ENCODE measurements at regions of chr14 and their contacts with region 1.

Region 1: DNA sequence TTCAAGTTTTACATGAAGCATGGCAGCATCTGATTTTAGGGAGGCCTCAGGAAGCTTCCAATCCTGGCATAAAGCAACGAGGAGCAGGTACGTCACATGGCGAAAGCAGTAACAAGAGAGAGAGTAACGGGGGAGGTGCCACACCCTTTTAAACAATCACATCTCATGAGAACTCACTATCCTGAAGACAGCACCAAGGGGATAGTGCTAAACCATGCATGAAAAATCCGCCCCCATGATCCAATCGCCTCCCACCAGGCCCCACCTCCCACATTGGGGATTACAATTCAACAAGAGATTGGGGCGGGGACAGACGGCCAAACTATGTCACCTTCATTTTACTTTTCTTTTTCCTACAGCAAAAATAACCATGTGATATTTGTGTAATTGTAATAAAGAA is 7.2 kb upstream of the MAP3K9 start:
- DNase-seq: peak in 1 of 2 experiments; percentile 16
- ATAC-seq: no peak
- H3K4me3 ChIP-seq: no peak overlapping the region
- H3K27ac ChIP-seq: no peak overlapping the region
- H3K4me1 ChIP-seq: peaks cover 24% of the 10 kb centered on the region
- CTCF ChIP-seq: no peak
- EP300 ChIP-seq: no peak
- POLR2A ChIP-seq: no peak
- RAD21 ChIP-seq: no peak

Region 2: DNA sequence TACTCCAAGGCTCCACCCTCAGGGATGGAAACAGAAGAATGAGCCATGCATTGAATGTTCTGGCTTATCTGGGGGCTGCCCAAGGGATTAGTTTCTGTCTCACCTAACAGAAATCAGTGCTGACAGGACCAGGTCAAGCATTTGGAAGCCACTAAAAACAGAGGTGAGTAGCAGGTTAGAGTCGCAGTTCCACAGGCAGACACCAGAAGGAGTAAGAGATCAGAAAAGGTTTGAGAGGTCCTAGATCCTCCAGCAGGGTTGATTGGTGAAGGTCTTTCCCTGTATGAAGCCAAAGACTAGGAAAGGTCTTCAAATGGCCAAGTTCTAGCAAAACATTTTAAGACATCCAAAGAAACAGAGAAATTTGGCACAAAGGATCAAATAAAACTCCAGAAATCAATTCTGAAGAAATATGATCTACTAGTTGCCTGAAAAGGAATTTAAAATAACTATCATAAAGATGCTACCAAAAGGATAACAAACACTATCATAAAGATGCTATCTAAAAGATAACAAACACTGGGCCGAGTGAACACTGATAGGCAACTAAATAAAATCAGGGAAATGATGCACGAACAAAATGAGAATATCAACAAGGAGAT is 194.3 kb before region 1 on chr14:
- CTCF ChIA-PET with region 1: interaction called, 34 read pairs
- POLR2A ChIA-PET with region 1: no interaction called
- DNase-seq: peak; percentile 58 to 67
- ATAC-seq: peak; percentile 95 to 96
- H3K4me3 ChIP-seq: no peak overlapping the region
- H3K27ac ChIP-seq: no peak overlapping the region
- H3K4me1 ChIP-seq: no peaks in the 10 kb centered on the region
- CTCF ChIP-seq: peak; percentile 65
- EP300 ChIP-seq: no peak
- POLR2A ChIP-seq: no peak
- RAD21 ChIP-seq: peak; percentile 71 to 81

Region 3: DNA sequence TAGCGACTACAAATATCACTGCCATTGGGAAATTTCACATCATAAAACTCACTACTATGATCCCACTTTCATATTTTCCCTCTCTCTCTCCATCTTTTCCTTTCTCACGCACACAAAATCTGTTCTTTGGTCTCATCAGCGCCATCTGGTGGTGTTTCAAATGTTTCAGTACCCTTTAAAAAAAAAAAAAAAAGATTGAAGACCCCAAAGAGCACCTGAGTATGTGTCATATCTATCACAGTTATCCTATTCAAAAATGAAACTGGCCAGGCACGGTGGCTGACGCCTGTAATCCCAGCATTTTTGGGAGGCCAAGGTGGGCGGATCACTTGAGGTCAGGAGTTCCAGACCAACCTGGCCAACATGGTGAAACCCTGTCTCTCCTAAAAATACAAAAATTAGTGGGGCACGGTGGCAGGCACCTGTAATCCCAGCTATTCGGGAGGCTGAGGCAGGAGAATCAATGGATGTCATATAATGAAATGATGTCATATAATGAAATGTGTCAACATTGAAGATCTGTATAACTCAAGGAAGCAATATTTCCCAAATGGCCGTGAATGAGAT is 102.4 kb before region 1 on chr14:
- CTCF ChIA-PET with region 1: interaction called, 18 read pairs
- POLR2A ChIA-PET with region 1: no interaction called
- DNase-seq: peak; percentile 58 to 70
- ATAC-seq: peak in 1 of 2 experiments; percentile 59; a peak in 3 of 6 replicates
- H3K4me3 ChIP-seq: no peak overlapping the region
- H3K27ac ChIP-seq: peak overlapping the region; percentile 11 to 61; a peak in 3 of 6 replicates
- H3K4me1 ChIP-seq: peaks cover 36% of the 10 kb centered on the region
- CTCF ChIP-seq: peak; percentile 77
- EP300 ChIP-seq: no peak
- POLR2A ChIP-seq: no peak
- RAD21 ChIP-seq: peak; percentile 55 to 67

Region 4: GRCh38 chr14:70794294-70794693 is 22.2 kb before region 1 on chr14:
- CTCF ChIA-PET with region 1: interaction called, 18 read pairs
- POLR2A ChIA-PET with region 1: no interaction called
- DNase-seq: no peak
- ATAC-seq: 0 out of 6 replicates have a peak, but pooled peaks of 1 of the 2 experiments have one; percentile 33
- H3K4me3 ChIP-seq: no peak overlapping the region
- H3K27ac ChIP-seq: no peak overlapping the region
- H3K4me1 ChIP-seq: peaks cover 6% of the 10 kb centered on the region; the same call in 1 of the 3 replicates
- CTCF ChIP-seq: no peak
- EP300 ChIP-seq: no peak
- POLR2A ChIP-seq: no peak
- RAD21 ChIP-seq: no peak

Region 5: GRCh38 chr14:70827396-70828151 is 11.0 kb after region 1 on chr14:
- CTCF ChIA-PET with region 1: interaction called, 46 read pairs
- POLR2A ChIA-PET with region 1: no interaction called
- DNase-seq: no peak
- ATAC-seq: no peak
- H3K4me3 ChIP-seq: no peak overlapping the region
- H3K27ac ChIP-seq: no peak overlapping the region
- H3K4me1 ChIP-seq: 0 out of 3 replicates have a peak, but pooled peaks cover 2% of the 10 kb centered on the region
- CTCF ChIP-seq: no peak
- EP300 ChIP-seq: no peak
- POLR2A ChIP-seq: no peak
- RAD21 ChIP-seq: no peak

Region 6: DNA sequence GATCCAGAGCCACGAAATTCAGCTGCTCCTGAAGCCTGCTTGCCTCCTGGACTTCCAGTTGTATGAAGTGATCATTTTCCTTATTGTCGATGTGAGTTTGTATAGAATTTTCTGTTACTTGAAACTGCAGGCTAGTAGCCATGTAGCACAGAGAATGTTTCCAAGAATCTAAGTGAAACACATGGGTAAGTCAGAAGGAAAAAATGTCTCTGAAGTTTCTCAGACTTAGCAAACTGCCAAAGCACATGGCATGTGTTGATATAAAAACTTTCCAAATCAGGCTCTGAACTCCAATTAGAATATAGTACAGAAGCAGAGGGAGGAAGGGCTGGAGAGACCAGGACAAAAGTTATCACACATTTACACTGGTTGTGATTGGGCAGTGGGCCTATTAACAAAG is 80.9 kb after region 1 on chr14:
- CTCF ChIA-PET with region 1: interaction called, 24 read pairs
- POLR2A ChIA-PET with region 1: no interaction called
- DNase-seq: no peak
- ATAC-seq: no peak
- H3K4me3 ChIP-seq: no peak overlapping the region
- H3K27ac ChIP-seq: no peak overlapping the region
- H3K4me1 ChIP-seq: peaks cover 5% of the 10 kb centered on the region; the same call in 1 of the 3 replicates
- CTCF ChIP-seq: no peak
- EP300 ChIP-seq: no peak
- POLR2A ChIP-seq: no peak
- RAD21 ChIP-seq: no peak

Region 7: DNA sequence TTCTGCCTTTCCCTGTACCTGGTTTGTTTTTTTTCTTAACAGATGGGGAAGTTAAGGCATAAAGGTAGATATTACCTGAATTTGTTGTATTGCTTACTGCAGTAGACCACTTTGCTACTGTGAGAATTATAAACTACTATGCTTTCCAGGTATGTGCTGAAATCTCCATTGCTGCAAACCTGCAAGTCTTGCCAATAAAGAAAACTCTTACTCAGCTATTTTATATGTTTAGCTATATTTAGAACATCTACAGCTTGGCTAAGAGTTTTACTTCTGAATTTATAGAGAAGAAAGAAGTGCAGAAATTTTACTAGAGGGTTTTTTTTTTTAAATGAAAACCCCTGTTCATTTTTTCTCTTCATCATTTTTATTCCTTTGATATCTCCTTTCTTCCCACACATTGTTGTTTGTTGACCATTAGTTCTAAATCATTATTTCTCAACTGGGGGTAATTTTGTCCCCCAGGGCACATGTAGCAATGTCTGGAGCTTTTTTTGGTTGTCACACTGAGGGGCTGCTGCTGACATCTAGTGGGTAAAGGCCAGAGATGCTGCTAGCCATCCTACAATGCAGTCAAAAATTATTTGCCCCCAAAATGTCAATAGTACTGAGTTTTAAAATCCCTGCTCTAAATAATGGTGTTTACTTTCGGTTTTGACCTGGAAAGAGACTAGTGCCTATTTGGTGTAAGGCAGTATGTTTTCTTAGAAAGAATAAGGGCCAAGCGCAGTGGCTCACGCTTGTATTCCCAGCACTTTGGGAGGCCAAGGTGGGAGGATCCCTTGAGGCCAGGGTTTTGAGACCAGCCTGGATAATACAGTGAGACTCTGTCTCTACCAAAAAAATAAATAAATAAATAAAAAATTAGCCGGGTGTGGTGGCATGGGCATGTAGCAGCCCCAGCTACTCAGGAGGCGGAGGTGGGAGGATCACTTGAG is 139.3 kb after region 1 on chr14:
- CTCF ChIA-PET with region 1: interaction called, 53 read pairs
- POLR2A ChIA-PET with region 1: no interaction called
- DNase-seq: peak in 1 of 2 experiments; percentile 23
- ATAC-seq: peak; percentile 71 to 79; a peak in 5 of 6 replicates
- H3K4me3 ChIP-seq: no peak overlapping the region
- H3K27ac ChIP-seq: no peak overlapping the region
- H3K4me1 ChIP-seq: peaks cover 6% of the 10 kb centered on the region; the same call in 1 of the 3 replicates
- CTCF ChIP-seq: peak; percentile 66
- EP300 ChIP-seq: no peak
- POLR2A ChIP-seq: no peak
- RAD21 ChIP-seq: peak; percentile 72 to 75

Region 8: GRCh38 chr14:71138448-71139293 is 322.1 kb after region 1 on chr14:
- CTCF ChIA-PET with region 1: no interaction called
- POLR2A ChIA-PET with region 1: no interaction called
- DNase-seq: peak; percentile 53 to 61
- ATAC-seq: peak; percentile 89 to 95
- H3K4me3 ChIP-seq: no peak overlapping the region
- H3K27ac ChIP-seq: no peak overlapping the region
- H3K4me1 ChIP-seq: peaks cover 7% of the 10 kb centered on the region; the same call in 2 of the 3 replicates
- CTCF ChIP-seq: peak; percentile 91
- EP300 ChIP-seq: no peak
- POLR2A ChIP-seq: no peak
- RAD21 ChIP-seq: peak; percentile 95

Measured in A549 (cell line).